Calu3 (cell line): ENCODE measurements at regions of chr4 and their contacts with region 1.

Region 1: GRCh38 chr4:12389604-12390003 is 960.9 kb upstream of the HS3ST1 start:
- DNase-seq: no peak
- H3K4me3 Mint-ChIP-seq: no peak overlapping the region
- H3K27ac Mint-ChIP-seq: no peak overlapping the region
- H3K4me1 Mint-ChIP-seq: no peaks in the 10 kb centered on the region
- H3K27me3 Mint-ChIP-seq: no peaks in the 10 kb centered on the region
- CTCF ChIP-seq: no peak

Region 2: DNA sequence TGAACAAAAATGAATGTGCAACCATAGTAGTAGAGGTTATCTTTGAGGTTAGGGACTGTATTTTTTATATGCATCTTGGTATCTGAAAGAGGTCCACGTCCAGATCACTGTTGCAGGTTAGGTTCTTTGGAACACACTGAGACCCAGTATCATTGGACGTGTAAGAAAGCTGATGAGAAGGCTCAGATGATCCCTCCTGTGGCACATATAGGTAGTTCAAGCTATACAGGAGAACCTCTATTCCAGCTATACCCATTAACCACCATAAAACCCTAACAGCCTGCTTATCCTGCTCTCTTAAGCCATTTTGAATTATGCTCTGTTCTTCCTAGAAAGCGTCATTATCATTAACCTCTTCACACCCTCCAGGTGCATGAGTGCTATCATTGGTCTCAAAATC is 30.2 kb before region 1 on chr4:
- CTCF ChIA-PET with region 1: no interaction called
- intact Hi-C with region 1: loop called (anchors 1 kb)
- DNase-seq: no peak
- H3K4me3 Mint-ChIP-seq: no peak overlapping the region
- H3K27ac Mint-ChIP-seq: no peak overlapping the region
- H3K4me1 Mint-ChIP-seq: no peaks in the 10 kb centered on the region
- H3K27me3 Mint-ChIP-seq: peaks cover 3% of the 10 kb centered on the region
- CTCF ChIP-seq: no peak

Region 3: GRCh38 chr4:12545813-12546212 is 156.2 kb after region 1 on chr4:
- CTCF ChIA-PET with region 1: no interaction called
- intact Hi-C with region 1: no loop called
- DNase-seq: no peak
- H3K4me3 Mint-ChIP-seq: no peak overlapping the region
- H3K27ac Mint-ChIP-seq: no peak overlapping the region
- H3K4me1 Mint-ChIP-seq: no peaks in the 10 kb centered on the region
- H3K27me3 Mint-ChIP-seq: no peaks in the 10 kb centered on the region
- CTCF ChIP-seq: no peak

Region 4: GRCh38 chr4:12658146-12658545 is 268.5 kb after region 1 on chr4:
- CTCF ChIA-PET with region 1: no interaction called
- intact Hi-C with region 1: no loop called
- DNase-seq: no peak
- H3K4me3 Mint-ChIP-seq: no peak overlapping the region
- H3K27ac Mint-ChIP-seq: no peak overlapping the region
- H3K4me1 Mint-ChIP-seq: no peaks in the 10 kb centered on the region
- H3K27me3 Mint-ChIP-seq: no peaks in the 10 kb centered on the region
- CTCF ChIP-seq: no peak

Region 5: DNA sequence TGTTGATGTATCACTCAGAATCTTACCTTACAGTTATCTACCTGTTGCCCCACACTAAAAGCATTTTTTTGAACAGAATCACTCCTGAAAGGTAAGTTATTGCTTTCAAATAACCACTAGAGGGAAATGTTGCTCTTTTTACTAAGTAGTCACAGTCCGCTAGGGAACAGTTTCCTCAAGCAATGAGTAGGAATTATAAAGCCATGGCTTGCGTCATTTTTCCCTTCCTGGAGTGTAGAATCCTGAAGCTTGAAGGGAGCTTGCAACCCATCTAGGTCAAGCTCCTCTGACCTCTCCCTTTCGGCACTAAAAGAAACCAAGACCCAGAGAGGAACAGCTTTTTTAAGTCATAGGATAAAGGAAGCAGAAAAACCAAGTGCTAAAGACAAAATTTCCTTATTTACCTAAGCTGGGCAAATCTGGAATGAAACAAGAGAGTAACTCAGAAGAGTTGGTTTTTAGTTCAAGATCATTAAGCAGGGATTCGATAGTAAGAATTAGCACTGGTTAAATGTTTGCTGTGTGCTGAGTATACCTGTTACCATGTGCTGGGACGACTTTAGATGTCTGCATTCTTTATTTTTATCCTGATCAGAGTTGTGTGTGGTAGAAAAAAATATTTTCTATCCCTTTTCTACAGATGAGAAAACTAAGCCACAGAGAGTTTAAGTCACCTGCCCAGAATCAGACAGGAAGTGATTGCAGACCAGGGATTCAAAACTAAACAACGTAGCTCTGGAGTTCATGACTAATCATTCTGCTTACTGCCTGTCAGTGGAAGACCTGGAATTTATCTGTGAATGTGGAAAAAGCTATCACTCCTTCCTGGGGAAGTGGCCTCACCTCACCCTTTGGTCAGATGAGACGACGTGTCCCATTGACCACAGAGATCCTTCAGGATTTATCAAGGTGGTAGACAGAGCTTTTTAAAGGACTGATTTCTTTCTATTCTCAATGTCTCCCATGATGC is 463.0 kb after region 1 on chr4:
- CTCF ChIA-PET with region 1: no interaction called
- intact Hi-C with region 1: no loop called
- DNase-seq: peak; percentile 1
- H3K4me3 Mint-ChIP-seq: no peak overlapping the region
- H3K27ac Mint-ChIP-seq: peak overlapping the region; percentile 70
- H3K4me1 Mint-ChIP-seq: no peaks in the 10 kb centered on the region
- H3K27me3 Mint-ChIP-seq: peaks cover 13% of the 10 kb centered on the region
- CTCF ChIP-seq: peak; percentile 19